ENCODE measurements at regions of chr10 and their contacts with region 1.

Region 1: GRCh38 chr10:117174439-117175214 is 22.7 kb upstream of the KCNK18 start:
- DNase-seq: peak; percentile 67 to 96
- H3K4me3 ChIP-seq: peak overlapping the region; percentile 29 to 67 (median 60); a peak in 7 of 8 replicates
- H3K27ac ChIP-seq: no peak overlapping the region
- H3K4me1 ChIP-seq: peaks cover 0 to 15% (median 7%) of the 10 kb centered on the region in 4 experiments; a peak in 6 of 7 replicates
- H3K27me3 ChIP-seq: peaks cover 32 to 56% (median 49%) of the 10 kb centered on the region in 4 experiments
- CTCF ChIP-seq: peak; percentile 70 to 96 (median 96)
- EP300 ChIP-seq: no peak
- POLR2A ChIP-seq: no peak
- RAD21 ChIP-seq: peak; percentile 93 to 94

Region 2: GRCh38 chr10:116683821-116684220 is 490.8 kb before region 1 on chr10:
- CTCF ChIA-PET with region 1: interaction called, 32 read pairs
- POLR2A ChIA-PET with region 1: no interaction called
- DNase-seq: no peak
- H3K4me3 ChIP-seq: no peak overlapping the region
- H3K27ac ChIP-seq: no peak overlapping the region
- H3K4me1 ChIP-seq: peaks cover 0 to 8% (median 0%) of the 10 kb centered on the region in 4 experiments; a peak in 1 of 7 replicates
- H3K27me3 ChIP-seq: no peaks in the 10 kb centered on the region
- CTCF ChIP-seq: no peak
- EP300 ChIP-seq: no peak
- POLR2A ChIP-seq: no peak
- RAD21 ChIP-seq: no peak; a peak in 1 of 4 replicates

Region 3: GRCh38 chr10:116796910-116797513 is 377.6 kb before region 1 on chr10:
- CTCF ChIA-PET with region 1: interaction called, 531 read pairs
- POLR2A ChIA-PET with region 1: no interaction called
- DNase-seq: peak; percentile 49 to 90
- H3K4me3 ChIP-seq: no peak overlapping the region
- H3K27ac ChIP-seq: no peak overlapping the region
- H3K4me1 ChIP-seq: peaks cover 2 to 8% (median 5%) of the 10 kb centered on the region in 4 experiments; a peak in 6 of 7 replicates
- H3K27me3 ChIP-seq: 0 out of 7 replicates have a peak, but pooled peaks cover 0 to 4% (median 1%) of the 10 kb centered on the region in 4 experiments
- CTCF ChIP-seq: peak; percentile 91 to 97 (median 93)
- EP300 ChIP-seq: no peak
- POLR2A ChIP-seq: no peak
- RAD21 ChIP-seq: peak; percentile 99

Region 4: DNA sequence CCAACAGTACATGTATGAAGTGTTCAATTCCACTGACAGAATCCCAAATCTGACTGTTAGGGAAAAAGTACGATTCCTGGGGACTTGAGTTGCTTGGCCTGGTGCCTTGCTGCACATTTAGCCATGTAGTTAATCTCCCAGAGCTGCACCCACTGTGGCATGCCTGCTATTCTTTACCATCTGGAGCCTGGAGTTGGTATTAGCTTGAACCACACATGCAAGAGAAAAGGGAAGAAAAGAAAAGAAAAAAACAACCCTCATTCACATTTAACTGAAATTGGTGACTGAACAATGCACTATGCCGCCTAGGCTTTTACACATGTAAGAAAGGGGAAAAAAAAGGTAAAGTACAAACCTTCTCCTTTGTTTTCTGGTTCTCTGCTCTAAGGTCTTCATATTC is 195.7 kb before region 1 on chr10:
- CTCF ChIA-PET with region 1: no interaction called
- POLR2A ChIA-PET with region 1: no interaction called
- DNase-seq: no peak
- H3K4me3 ChIP-seq: peak overlapping the region in 1 of 4 experiments; percentile 16; a peak in 1 of 8 replicates
- H3K27ac ChIP-seq: no peak overlapping the region
- H3K4me1 ChIP-seq: peaks cover 0 to 9% (median 5%) of the 10 kb centered on the region in 4 experiments; a peak in 3 of 7 replicates
- H3K27me3 ChIP-seq: no peaks in the 10 kb centered on the region
- CTCF ChIP-seq: no peak
- EP300 ChIP-seq: no peak
- POLR2A ChIP-seq: no peak
- RAD21 ChIP-seq: no peak

Region 5: GRCh38 chr10:117112220-117112619 is 62.4 kb before region 1 on chr10:
- CTCF ChIA-PET with region 1: interaction called, 18 read pairs
- POLR2A ChIA-PET with region 1: no interaction called
- DNase-seq: no peak
- H3K4me3 ChIP-seq: no peak overlapping the region
- H3K27ac ChIP-seq: no peak overlapping the region
- H3K4me1 ChIP-seq: no peaks in the 10 kb centered on the region
- H3K27me3 ChIP-seq: no peaks in the 10 kb centered on the region; a peak in 1 of 7 replicates
- CTCF ChIP-seq: peak in 1 of 3 experiments; percentile 50; a peak in 1 of 4 replicates
- EP300 ChIP-seq: no peak
- POLR2A ChIP-seq: no peak
- RAD21 ChIP-seq: peak; percentile 30; a peak in 3 of 4 replicates

Region 6: GRCh38 chr10:117143103-117143823 is 31.4 kb before region 1 on chr10:
- CTCF ChIA-PET with region 1: interaction called, 212 read pairs
- POLR2A ChIA-PET with region 1: no interaction called
- DNase-seq: no peak
- H3K4me3 ChIP-seq: no peak overlapping the region
- H3K27ac ChIP-seq: no peak overlapping the region
- H3K4me1 ChIP-seq: peaks cover 2 to 6% (median 4%) of the 10 kb centered on the region in 4 experiments; a peak in 5 of 7 replicates
- H3K27me3 ChIP-seq: peaks cover 75 to 96% (median 87%) of the 10 kb centered on the region in 4 experiments
- CTCF ChIP-seq: no peak
- EP300 ChIP-seq: no peak
- POLR2A ChIP-seq: no peak
- RAD21 ChIP-seq: no peak

Region 7: GRCh38 chr10:117186832-117187615 is 12.4 kb after region 1 on chr10:
- CTCF ChIA-PET with region 1: interaction called, 38 read pairs
- POLR2A ChIA-PET with region 1: no interaction called
- DNase-seq: no peak
- H3K4me3 ChIP-seq: no peak overlapping the region
- H3K27ac ChIP-seq: no peak overlapping the region
- H3K4me1 ChIP-seq: no peaks in the 10 kb centered on the region
- H3K27me3 ChIP-seq: no peaks in the 10 kb centered on the region; a peak in 1 of 7 replicates
- CTCF ChIP-seq: no peak
- EP300 ChIP-seq: no peak
- POLR2A ChIP-seq: no peak
- RAD21 ChIP-seq: no peak

Measured in H1 (cell line).